B cell (primary cell): ENCODE measurements at regions of chr20 and their contacts with region 1.

Region 1: DNA sequence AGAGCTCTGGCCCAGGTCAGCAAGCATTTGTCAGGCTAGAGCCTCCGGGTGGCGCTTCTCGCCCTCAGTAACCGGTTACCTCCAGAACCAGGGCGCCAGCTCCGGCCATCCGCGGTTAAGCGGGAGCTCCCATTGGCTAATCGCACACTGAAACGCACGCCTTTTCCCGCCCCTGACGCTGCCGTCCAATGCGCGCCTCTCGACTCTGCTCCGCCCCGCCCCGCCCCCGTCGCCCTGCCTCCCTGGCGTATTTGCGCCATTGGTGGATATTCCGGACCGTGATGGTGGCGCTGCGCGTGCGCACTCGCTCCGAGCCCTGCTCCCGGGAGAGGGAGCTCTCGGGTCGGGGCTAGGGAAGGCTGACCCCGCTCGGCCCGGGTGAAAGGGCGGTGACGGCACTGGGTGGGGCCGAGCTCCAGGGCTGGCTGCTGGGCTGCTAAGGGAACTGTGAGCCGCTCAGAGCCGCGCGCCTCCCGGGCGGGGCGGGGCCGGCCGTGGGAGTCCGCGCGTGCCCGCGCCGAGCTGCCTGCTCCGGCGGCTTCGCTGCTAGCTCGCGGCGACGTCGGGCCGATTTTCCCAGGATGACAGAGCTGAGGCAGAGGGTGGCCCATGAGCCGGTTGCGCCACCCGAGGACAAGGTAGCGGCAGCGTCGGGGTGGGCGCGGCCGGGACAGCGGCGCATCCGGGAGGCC is at the start of gene CDS2:
- DNase-seq: peak; percentile 100
- ATAC-seq: peak; percentile 86
- H3K4me3 ChIP-seq: peak within 1 kb of the TSS; percentile 79 to 91 (median 89)
- H3K4me3 Mint-ChIP-seq: peak within 1 kb of the TSS; percentile 88
- H3K27ac ChIP-seq: peak within 1 kb of the TSS; percentile 98
- H3K27ac Mint-ChIP-seq: peak within 1 kb of the TSS; percentile 94
- H3K4me1 ChIP-seq: peaks cover 21 to 26% of the 10 kb centered on the region in 2 donors
- H3K4me1 Mint-ChIP-seq: peaks cover 35% of the 10 kb centered on the region
- H3K27me3 ChIP-seq: no peaks in the 10 kb centered on the region
- H3K27me3 Mint-ChIP-seq: no peaks in the 10 kb centered on the region
- CTCF ChIP-seq: peak; percentile 69
- total RNA-seq, gene CDS2: 48.6 and 49.4 TPM in 2 replicates

Region 2: GRCh38 chr20:3470627-3471396 is 1655.8 kb before region 1 on chr20 and contains the start of gene ATRN:
- CTCF ChIA-PET with region 1: no interaction called
- POLR2A ChIA-PET with region 1: no interaction called
- intact Hi-C with region 1: loop called (anchors 5 kb)
- DNase-seq: peak; percentile 94
- ATAC-seq: peak; percentile 92
- H3K4me3 ChIP-seq: peak within 1 kb of the TSS; percentile 49 to 88 (median 72)
- H3K4me3 Mint-ChIP-seq: peak within 1 kb of the TSS; percentile 90
- H3K27ac ChIP-seq: peak within 1 kb of the TSS; percentile 46 to 72
- H3K27ac Mint-ChIP-seq: peak within 1 kb of the TSS; percentile 88
- H3K4me1 ChIP-seq: peaks cover 25 to 35% of the 10 kb centered on the region in 2 donors
- H3K4me1 Mint-ChIP-seq: peaks cover 36% of the 10 kb centered on the region
- H3K27me3 ChIP-seq: peaks cover 0 to 2% (median under 1%) of the 10 kb centered on the region in 4 experiments
- H3K27me3 Mint-ChIP-seq: peaks cover 6% of the 10 kb centered on the region
- CTCF ChIP-seq: no peak
- total RNA-seq, gene ATRN: 18.3 and 19.5 TPM in 2 replicates

Region 3: DNA sequence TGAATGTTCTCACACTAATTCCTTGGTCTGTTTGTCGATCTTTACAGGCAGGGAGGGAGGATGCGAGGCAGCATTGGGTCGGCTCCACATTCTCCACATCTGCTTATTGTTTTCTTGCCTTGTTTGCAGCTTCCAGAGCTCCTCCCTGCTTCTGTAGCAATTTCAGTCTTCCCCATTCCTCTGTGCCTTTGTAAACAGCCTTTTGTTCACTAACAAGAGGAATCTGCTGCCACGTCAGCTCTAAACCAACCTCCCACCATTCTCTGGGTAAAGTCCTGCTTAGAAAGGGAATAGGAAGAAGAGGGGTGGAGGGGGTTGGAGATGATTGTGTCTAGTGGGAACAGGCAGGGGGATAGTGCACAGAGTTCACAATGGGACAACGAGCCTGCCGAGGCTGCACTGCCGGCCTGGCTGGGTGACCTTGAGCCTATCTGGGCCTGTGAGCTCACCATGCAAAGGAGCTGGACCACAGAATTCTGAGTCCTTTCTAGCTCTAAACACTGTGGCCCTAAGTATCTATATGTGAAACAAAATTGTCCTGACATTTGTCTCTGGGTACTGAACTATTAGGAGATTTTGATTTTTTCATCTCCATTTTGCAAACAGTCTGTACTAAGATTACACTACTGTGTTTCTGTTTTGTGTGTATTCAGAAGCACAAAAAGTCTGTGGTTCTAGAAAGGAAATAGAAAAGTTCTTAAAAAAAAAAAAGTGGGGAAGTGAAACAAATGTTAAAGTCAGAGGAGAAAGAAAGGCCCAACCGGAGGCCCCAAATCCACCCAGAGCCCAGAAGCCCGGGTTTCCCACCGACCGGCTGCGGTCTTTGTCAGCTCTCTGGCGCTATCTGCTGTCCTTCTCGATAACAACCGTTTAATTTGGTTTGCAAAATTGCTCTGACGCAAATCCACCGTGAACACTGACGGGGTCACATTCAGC is 406.3 kb before region 1 on chr20:
- CTCF ChIA-PET with region 1: no interaction called
- POLR2A ChIA-PET with region 1: no interaction called
- intact Hi-C with region 1: loop called (anchors 1 kb)
- DNase-seq: peak; percentile 95
- ATAC-seq: peak; percentile 98
- H3K4me3 ChIP-seq: peak overlapping the region in 2 of 5 experiments; percentile 33 to 38
- H3K4me3 Mint-ChIP-seq: peak overlapping the region; percentile 72
- H3K27ac ChIP-seq: peak overlapping the region; percentile 86 to 89
- H3K27ac Mint-ChIP-seq: peak overlapping the region; percentile 92
- H3K4me1 ChIP-seq: peaks cover 28 to 30% of the 10 kb centered on the region in 2 donors
- H3K4me1 Mint-ChIP-seq: peaks cover 50% of the 10 kb centered on the region
- H3K27me3 ChIP-seq: no peaks in the 10 kb centered on the region
- H3K27me3 Mint-ChIP-seq: no peaks in the 10 kb centered on the region
- CTCF ChIP-seq: peak; percentile 83

Region 4: DNA sequence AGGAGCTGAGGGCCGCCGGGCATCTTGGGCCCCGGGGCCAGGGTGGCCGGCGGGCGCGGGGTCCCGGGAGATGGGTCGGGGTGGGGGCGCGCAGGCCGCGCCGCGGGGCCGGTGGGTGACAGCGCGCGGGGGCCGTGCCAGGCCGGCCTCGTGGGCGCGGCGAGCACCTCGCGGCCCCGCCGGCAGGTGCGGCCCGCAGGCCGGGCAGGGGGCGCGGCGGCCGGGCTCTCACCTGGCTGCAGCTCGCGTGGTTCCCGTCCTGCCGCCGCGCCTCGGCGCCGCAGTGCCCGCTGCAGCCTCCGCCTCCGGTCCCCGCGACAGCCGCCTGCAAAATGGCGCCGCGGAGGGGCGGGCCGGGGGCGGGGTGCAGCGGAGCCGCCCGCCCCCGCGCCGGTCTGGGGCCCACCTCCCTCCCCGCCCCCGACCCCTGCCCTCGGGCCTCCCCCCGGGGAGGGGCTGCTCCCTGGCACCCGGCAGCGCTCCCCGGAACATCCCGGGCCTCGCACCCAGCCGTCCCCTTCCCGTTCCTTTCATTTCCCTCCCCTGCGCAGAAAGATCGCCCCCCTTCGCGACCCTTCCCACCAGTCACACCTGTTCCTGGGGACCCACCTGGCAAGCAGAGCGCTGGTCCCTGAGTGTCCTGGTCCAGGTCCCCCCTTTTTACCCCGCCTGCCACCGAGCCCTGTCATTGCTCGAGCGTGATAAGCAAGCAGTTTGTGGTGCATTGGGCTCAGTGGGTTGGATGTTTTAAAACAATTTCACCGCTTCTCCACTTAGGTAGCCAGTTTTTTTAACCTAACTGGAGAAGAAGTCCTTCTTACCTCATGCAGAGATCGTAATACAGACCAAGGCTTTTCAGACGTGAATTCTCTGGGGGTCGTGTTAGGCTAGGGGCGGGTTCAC is 125.2 kb before region 1 on chr20 and contains the start of gene SLC23A2:
- CTCF ChIA-PET with region 1: no interaction called
- POLR2A ChIA-PET with region 1: no interaction called
- intact Hi-C with region 1: no loop called
- DNase-seq: peak; percentile 73
- ATAC-seq: peak; percentile 77
- H3K4me3 ChIP-seq: peak within 1 kb of the TSS; percentile 51 to 81 (median 71)
- H3K4me3 Mint-ChIP-seq: peak within 1 kb of the TSS; percentile 97
- H3K27ac ChIP-seq: peak within 1 kb of the TSS; percentile 43 to 71
- H3K27ac Mint-ChIP-seq: peak within 1 kb of the TSS; percentile 97
- H3K4me1 ChIP-seq: peaks cover 28 to 39% of the 10 kb centered on the region in 2 donors
- H3K4me1 Mint-ChIP-seq: peaks cover 37% of the 10 kb centered on the region
- H3K27me3 ChIP-seq: no peaks in the 10 kb centered on the region
- H3K27me3 Mint-ChIP-seq: no peaks in the 10 kb centered on the region
- CTCF ChIP-seq: no peak
- total RNA-seq, gene SLC23A2: 70.7 and 75.2 TPM in 2 replicates

Region 5: DNA sequence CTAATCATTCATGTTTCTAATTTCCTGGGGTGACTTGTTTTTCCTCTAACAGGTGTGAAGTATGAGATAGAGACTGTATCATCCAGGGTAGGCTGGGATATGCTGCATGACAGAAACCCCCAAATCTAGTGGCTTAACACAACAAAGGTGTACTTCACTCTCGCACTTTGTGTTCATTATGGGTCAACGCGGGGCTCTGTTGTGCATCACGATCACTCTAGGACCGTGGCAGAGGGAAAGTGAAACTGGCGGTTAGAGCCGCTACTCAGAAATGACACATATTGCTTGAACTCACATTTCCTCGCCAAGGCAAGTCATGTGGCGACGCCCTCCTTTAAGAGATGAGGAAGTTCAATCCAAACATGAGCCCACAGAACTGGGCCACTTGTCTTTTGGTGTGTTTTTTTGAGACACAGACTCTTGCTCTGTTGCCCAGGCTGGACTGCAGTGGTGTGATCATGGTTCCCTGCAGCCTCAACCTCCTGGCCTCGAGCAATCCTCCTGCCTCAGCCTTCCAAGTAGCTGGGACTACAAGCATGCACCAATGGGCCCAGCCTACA is 48.2 kb before region 1 on chr20:
- CTCF ChIA-PET with region 1: no interaction called
- POLR2A ChIA-PET with region 1: no interaction called
- intact Hi-C with region 1: loop called (anchors 2 kb)
- DNase-seq: peak; percentile 91
- ATAC-seq: peak; percentile 96
- H3K4me3 ChIP-seq: peak overlapping the region; percentile 23 to 68 (median 50)
- H3K4me3 Mint-ChIP-seq: peak overlapping the region; percentile 85
- H3K27ac ChIP-seq: peak overlapping the region; percentile 85 to 93
- H3K27ac Mint-ChIP-seq: peak overlapping the region; percentile 94
- H3K4me1 ChIP-seq: peaks cover 37 to 50% of the 10 kb centered on the region in 2 donors
- H3K4me1 Mint-ChIP-seq: peaks cover 51% of the 10 kb centered on the region
- H3K27me3 ChIP-seq: no peaks in the 10 kb centered on the region
- H3K27me3 Mint-ChIP-seq: no peaks in the 10 kb centered on the region
- CTCF ChIP-seq: no peak

Region 6: DNA sequence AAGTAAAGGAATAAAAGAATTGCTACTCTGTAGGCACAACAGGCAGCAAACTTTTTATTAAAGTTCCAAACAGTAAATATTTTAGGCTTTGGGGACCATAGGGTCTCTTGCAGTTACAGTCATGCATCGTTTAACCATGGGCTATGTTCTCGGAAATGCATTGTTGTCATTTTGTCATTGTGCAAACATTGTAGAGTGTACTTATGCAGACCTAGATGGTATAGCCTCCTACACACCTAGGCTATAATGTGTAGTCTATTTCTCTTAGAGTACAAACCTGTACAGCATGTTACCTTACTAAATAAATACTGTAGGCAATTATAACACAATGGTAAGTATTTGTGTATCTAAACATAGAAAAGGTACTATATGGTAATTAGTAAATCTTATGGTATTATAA is 54.8 kb after region 1 on chr20:
- CTCF ChIA-PET with region 1: interaction called, 14 read pairs
- POLR2A ChIA-PET with region 1: no interaction called
- intact Hi-C with region 1: no loop called
- DNase-seq: no peak
- ATAC-seq: no peak
- H3K4me3 ChIP-seq: no peak overlapping the region
- H3K4me3 Mint-ChIP-seq: no peak overlapping the region
- H3K27ac ChIP-seq: no peak overlapping the region
- H3K27ac Mint-ChIP-seq: no peak overlapping the region
- H3K4me1 ChIP-seq: no peaks in the 10 kb centered on the region
- H3K4me1 Mint-ChIP-seq: peaks cover 9% of the 10 kb centered on the region
- H3K27me3 ChIP-seq: no peaks in the 10 kb centered on the region
- H3K27me3 Mint-ChIP-seq: no peaks in the 10 kb centered on the region
- CTCF ChIP-seq: no peak

Region 7: GRCh38 chr20:5205348-5206210 is 78.9 kb after region 1 on chr20:
- CTCF ChIA-PET with region 1: interaction called, 13 read pairs
- POLR2A ChIA-PET with region 1: no interaction called
- intact Hi-C with region 1: no loop called
- DNase-seq: peak; percentile 68
- ATAC-seq: peak; percentile 88
- H3K4me3 ChIP-seq: no peak overlapping the region
- H3K4me3 Mint-ChIP-seq: no peak overlapping the region
- H3K27ac ChIP-seq: no peak overlapping the region
- H3K27ac Mint-ChIP-seq: no peak overlapping the region
- H3K4me1 ChIP-seq: no peaks in the 10 kb centered on the region
- H3K4me1 Mint-ChIP-seq: no peaks in the 10 kb centered on the region
- H3K27me3 ChIP-seq: no peaks in the 10 kb centered on the region
- H3K27me3 Mint-ChIP-seq: no peaks in the 10 kb centered on the region
- CTCF ChIP-seq: peak; percentile 95

Region 8: DNA sequence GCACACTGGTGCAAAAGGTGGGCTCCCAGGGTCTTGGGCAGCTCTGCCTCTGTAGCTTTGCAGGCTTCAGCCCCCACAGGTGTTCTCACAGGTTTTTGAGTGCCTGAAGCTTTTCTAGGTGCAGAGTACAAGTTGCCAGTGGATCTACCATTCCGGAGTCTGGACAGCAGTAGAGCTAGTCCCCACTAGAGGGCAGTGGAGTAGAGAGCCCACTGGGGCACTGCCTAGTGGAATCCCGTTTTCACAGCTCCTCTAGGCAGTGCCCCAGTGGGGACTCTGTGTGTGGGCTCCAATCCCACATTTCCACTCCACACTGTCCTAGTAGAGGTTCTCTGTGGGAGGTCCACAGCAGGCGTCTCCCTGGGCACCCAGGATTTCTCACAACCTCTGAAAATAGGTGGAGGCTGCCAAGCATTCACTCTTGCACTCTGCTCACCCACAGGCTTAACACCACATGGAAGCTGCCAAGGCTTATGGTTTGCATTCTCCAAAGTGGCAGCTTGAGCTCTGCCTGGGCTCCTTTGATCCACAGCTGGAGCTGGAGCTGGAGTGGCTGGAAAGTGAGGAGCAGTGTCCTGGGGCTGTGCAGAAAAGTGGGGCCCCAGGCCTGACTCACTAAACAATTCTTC is 276.4 kb after region 1 on chr20:
- CTCF ChIA-PET with region 1: no interaction called
- POLR2A ChIA-PET with region 1: no interaction called
- intact Hi-C with region 1: no loop called
- DNase-seq: no peak
- ATAC-seq: no peak
- H3K4me3 ChIP-seq: no peak overlapping the region
- H3K4me3 Mint-ChIP-seq: no peak overlapping the region
- H3K27ac ChIP-seq: no peak overlapping the region
- H3K27ac Mint-ChIP-seq: no peak overlapping the region
- H3K4me1 ChIP-seq: no peaks in the 10 kb centered on the region
- H3K4me1 Mint-ChIP-seq: no peaks in the 10 kb centered on the region
- H3K27me3 ChIP-seq: no peaks in the 10 kb centered on the region
- H3K27me3 Mint-ChIP-seq: peaks cover 15% of the 10 kb centered on the region
- CTCF ChIP-seq: no peak

Region 9: GRCh38 chr20:5448449-5449118 is 321.9 kb after region 1 on chr20:
- CTCF ChIA-PET with region 1: interaction called, 18 read pairs
- POLR2A ChIA-PET with region 1: no interaction called
- intact Hi-C with region 1: no loop called
- DNase-seq: peak; percentile 56
- ATAC-seq: peak; percentile 47
- H3K4me3 ChIP-seq: no peak overlapping the region
- H3K4me3 Mint-ChIP-seq: no peak overlapping the region
- H3K27ac ChIP-seq: no peak overlapping the region
- H3K27ac Mint-ChIP-seq: no peak overlapping the region
- H3K4me1 ChIP-seq: no peaks in the 10 kb centered on the region
- H3K4me1 Mint-ChIP-seq: no peaks in the 10 kb centered on the region
- H3K27me3 ChIP-seq: peaks cover 0 to 12% (median 4%) of the 10 kb centered on the region in 4 experiments
- H3K27me3 Mint-ChIP-seq: peaks cover 44% of the 10 kb centered on the region
- CTCF ChIP-seq: peak; percentile 84